ENCODE measurements at regions of chr7 and their contacts with region 1.

Region 1: DNA sequence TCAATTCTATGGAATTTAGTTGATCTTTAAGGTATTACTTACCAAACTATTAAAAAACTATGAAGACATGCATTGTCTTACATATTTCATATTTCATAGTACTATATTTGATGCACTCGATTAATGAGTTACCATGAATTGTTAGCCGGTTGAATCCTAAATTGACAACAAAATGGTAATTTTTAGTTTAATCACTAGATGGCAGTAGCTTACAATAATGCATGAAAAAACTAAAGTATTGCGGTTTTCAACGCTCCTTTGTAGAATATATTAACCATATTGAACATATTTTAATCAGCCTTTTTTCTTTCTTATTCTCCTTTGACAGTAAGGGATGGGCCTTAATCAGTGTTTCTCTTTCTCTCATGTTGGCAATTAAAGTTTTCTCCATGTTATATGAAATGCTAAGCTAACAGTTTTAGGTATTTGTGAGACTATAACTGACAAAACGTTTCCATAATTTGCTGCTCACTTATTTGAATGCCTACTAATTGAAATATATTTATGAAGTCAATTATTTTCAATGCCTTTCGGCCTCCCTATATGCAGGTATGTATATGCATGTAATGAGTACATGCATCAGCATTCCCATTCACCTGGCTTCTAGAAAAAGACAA is 48.5 kb upstream of the ARL4A start:
- DNase-seq: no peak
- H3K4me3 Mint-ChIP-seq: no peak overlapping the region
- H3K27ac Mint-ChIP-seq: no peak overlapping the region
- H3K4me1 Mint-ChIP-seq: peaks cover 18% of the 10 kb centered on the region
- H3K27me3 Mint-ChIP-seq: no peaks in the 10 kb centered on the region

Region 2: GRCh38 chr7:12524794-12525386 is 114.1 kb before region 1 on chr7:
- CTCF ChIA-PET with region 1: interaction called, 18 read pairs
- POLR2A ChIA-PET with region 1: no interaction called
- intact Hi-C with region 1: loop called (anchors 5 kb)
- DNase-seq: no peak
- H3K4me3 Mint-ChIP-seq: no peak overlapping the region
- H3K27ac Mint-ChIP-seq: no peak overlapping the region
- H3K4me1 Mint-ChIP-seq: no peaks in the 10 kb centered on the region
- H3K27me3 Mint-ChIP-seq: peaks cover 12% of the 10 kb centered on the region

Region 3: GRCh38 chr7:12557282-12557681 is 81.7 kb before region 1 on chr7:
- CTCF ChIA-PET with region 1: no interaction called
- POLR2A ChIA-PET with region 1: no interaction called
- intact Hi-C with region 1: no loop called
- DNase-seq: no peak
- H3K4me3 Mint-ChIP-seq: no peak overlapping the region
- H3K27ac Mint-ChIP-seq: no peak overlapping the region
- H3K4me1 Mint-ChIP-seq: no peaks in the 10 kb centered on the region
- H3K27me3 Mint-ChIP-seq: peaks cover 1% of the 10 kb centered on the region

Region 4: GRCh38 chr7:12674849-12675248 is 35.9 kb after region 1 on chr7:
- CTCF ChIA-PET with region 1: interaction called, 6 read pairs
- POLR2A ChIA-PET with region 1: no interaction called
- intact Hi-C with region 1: loop called (anchors 2 kb)
- DNase-seq: peak; percentile 44
- H3K4me3 Mint-ChIP-seq: no peak overlapping the region
- H3K27ac Mint-ChIP-seq: no peak overlapping the region
- H3K4me1 Mint-ChIP-seq: peaks cover 12% of the 10 kb centered on the region
- H3K27me3 Mint-ChIP-seq: no peaks in the 10 kb centered on the region

Region 5: DNA sequence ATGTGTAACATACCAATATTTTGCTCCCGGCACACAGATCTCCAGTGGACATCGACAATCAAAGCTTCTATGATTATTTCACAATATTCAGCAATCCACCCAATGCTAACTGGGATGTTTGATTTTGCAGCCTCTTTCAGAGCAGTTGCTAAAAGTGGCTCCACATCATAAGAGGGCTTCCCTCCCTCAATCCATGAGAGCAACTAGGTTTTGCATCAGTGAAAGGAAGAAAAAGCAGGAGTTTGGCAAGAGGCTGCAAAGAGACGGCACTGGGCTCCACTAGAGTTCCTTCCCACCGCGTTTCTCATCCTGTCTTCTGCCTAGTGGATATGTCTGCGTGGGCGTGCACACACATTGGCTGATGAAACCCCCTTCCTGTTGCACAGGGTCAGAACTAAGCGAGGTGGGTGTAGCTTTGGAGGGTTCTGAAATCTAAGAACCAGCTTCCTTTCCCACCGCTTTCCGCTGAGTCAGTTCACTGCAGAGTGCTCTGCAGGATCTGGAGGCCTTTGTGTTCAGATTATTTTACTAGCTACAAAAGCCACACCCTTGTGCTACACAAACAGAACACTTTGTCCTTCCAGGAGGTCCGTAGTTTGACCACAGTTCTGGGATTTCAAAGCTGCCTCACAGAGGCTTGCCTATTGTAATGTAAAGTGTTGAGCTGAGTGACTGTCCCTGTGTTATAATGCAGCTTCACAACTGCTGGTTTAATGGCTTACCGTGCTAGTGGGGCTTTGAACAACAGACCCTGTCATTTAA is 76.6 kb after region 1 on chr7:
- CTCF ChIA-PET with region 1: no interaction called
- POLR2A ChIA-PET with region 1: no interaction called
- intact Hi-C with region 1: loop called (anchors 10 kb)
- DNase-seq: peak; percentile 53
- H3K4me3 Mint-ChIP-seq: no peak overlapping the region
- H3K27ac Mint-ChIP-seq: no peak overlapping the region
- H3K4me1 Mint-ChIP-seq: peaks cover 22% of the 10 kb centered on the region
- H3K27me3 Mint-ChIP-seq: no peaks in the 10 kb centered on the region

Region 6: DNA sequence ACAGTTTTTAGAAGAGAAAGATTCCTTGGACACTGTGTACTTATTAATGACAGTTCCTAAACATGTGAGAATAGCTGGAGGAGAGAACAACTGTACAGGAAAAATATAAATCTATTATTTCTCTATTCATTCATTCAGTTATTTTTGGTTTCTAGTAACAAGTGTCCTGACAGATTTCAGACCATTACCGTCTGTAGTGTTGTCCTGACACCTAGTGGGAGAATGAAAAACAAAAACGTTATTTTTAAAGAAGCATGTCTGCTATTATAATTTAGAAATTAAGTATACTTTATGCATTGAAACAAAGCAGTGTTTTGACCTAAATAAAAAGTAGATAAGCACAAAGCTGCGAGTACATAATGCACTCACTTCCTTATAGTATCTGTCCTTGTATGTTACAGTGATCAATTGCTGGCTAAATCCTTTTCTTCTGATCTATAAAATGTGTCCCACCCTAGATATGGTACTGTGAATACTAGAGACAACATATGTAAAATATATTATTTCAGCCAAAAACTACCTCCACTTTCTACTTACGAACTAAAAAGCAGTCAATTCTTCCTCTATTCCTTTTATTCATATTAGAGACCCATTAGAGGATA is 624.1 kb after region 1 on chr7:
- CTCF ChIA-PET with region 1: interaction called, 36 read pairs
- POLR2A ChIA-PET with region 1: no interaction called
- intact Hi-C with region 1: loop called (anchors 1 kb)
- DNase-seq: no peak
- H3K4me3 Mint-ChIP-seq: no peak overlapping the region
- H3K27ac Mint-ChIP-seq: no peak overlapping the region
- H3K4me1 Mint-ChIP-seq: no peaks in the 10 kb centered on the region
- H3K27me3 Mint-ChIP-seq: peaks cover 2% of the 10 kb centered on the region